ENCODE measurements at regions of chr18 and their contacts with region 1.

Region 1: GRCh38 chr18:43271593-43272432 is 5.5 kb downstream of the SYT4 start:
- DNase-seq: no peak
- H3K4me3 ChIP-seq: no peak overlapping the region
- H3K27ac ChIP-seq: no peak overlapping the region
- H3K4me1 ChIP-seq: peaks cover 0 to 5% (median 1%) of the 10 kb centered on the region in 4 experiments; a peak in 1 of 7 replicates
- H3K27me3 ChIP-seq: no peaks in the 10 kb centered on the region
- CTCF ChIP-seq: peak in 2 of 3 experiments; percentile 31 to 45; a peak in 2 of 4 replicates
- EP300 ChIP-seq: no peak
- POLR2A ChIP-seq: no peak
- RAD21 ChIP-seq: peak; percentile 76 to 80

Region 2: GRCh38 chr18:42298759-42299675 is 972.8 kb before region 1 on chr18:
- CTCF ChIA-PET with region 1: interaction called, 16 read pairs
- POLR2A ChIA-PET with region 1: no interaction called
- DNase-seq: peak; percentile 64 to 87
- H3K4me3 ChIP-seq: no peak overlapping the region
- H3K27ac ChIP-seq: no peak overlapping the region
- H3K4me1 ChIP-seq: peaks cover 0 to 3% (median 0%) of the 10 kb centered on the region in 4 experiments; a peak in 3 of 7 replicates
- H3K27me3 ChIP-seq: no peaks in the 10 kb centered on the region
- CTCF ChIP-seq: peak; percentile 74 to 91 (median 79)
- EP300 ChIP-seq: no peak
- POLR2A ChIP-seq: no peak
- RAD21 ChIP-seq: peak; percentile 89 to 93

Region 3: GRCh38 chr18:42742969-42743368 is 528.8 kb before region 1 on chr18:
- CTCF ChIA-PET with region 1: interaction called, 10 read pairs
- POLR2A ChIA-PET with region 1: interaction called, 4 read pairs
- DNase-seq: no peak
- H3K4me3 ChIP-seq: peak overlapping the region in 3 of 4 experiments; percentile 2 to 48 (median 18); a peak in 4 of 8 replicates
- H3K27ac ChIP-seq: peak overlapping the region; percentile 73
- H3K4me1 ChIP-seq: peaks cover 2 to 22% (median 12%) of the 10 kb centered on the region in 4 experiments; a peak in 4 of 7 replicates
- H3K27me3 ChIP-seq: no peaks in the 10 kb centered on the region
- CTCF ChIP-seq: no peak
- EP300 ChIP-seq: no peak
- POLR2A ChIP-seq: no peak
- RAD21 ChIP-seq: no peak

Region 4: DNA sequence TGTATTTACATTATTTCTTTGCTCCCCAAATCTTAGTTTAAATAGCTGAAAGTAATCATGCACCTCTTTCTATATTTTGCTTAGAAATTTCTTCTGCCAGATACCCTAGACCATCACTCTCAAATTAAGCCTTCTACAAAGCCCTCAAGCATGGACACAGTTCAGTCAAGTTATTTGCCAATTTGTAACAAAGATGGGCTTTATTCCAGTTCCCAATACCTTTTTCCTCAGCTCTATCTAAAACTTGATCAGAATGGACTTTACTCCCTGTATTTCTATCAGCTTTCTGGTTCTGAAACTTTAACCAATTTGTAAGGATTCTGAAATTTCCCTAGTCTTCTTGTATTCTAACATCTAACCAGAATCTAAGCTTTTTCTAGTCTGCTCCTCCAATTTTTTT is 51.1 kb before region 1 on chr18:
- CTCF ChIA-PET with region 1: interaction called, 10 read pairs
- POLR2A ChIA-PET with region 1: no interaction called
- DNase-seq: no peak
- H3K4me3 ChIP-seq: no peak overlapping the region
- H3K27ac ChIP-seq: no peak overlapping the region
- H3K4me1 ChIP-seq: no peaks in the 10 kb centered on the region
- H3K27me3 ChIP-seq: no peaks in the 10 kb centered on the region
- CTCF ChIP-seq: no peak
- EP300 ChIP-seq: no peak
- POLR2A ChIP-seq: no peak
- RAD21 ChIP-seq: no peak

Region 5: DNA sequence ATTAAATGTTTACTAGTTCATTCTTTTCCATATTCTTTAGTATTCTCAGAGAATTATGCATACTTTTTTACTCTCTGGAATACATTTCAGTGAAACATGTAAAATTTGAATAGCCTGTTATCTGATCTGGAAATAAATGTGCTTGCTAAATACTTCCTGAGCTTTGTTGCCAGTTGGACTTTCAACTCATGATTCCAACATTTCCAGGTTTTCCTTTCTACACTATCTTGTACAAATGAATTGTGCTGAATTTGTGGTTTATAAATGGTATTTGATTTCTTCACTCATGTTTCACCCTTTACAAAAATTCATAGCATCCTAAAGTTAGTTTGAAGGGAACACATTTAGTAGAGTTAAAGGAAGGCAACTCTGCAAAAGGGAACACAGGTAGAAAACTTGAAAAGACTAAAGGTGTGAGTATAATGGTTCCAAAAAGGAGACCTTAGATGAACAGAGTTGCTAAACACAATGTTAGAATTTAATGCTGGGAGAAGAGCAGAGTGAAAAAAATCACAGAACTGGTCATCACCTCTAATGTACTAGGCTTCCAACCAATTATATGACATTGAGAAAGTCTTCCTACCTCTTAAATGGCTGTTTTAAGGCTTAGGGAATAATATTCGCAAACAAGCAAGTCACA is 23.1 kb before region 1 on chr18:
- CTCF ChIA-PET with region 1: interaction called, 19 read pairs
- POLR2A ChIA-PET with region 1: no interaction called
- DNase-seq: no peak
- H3K4me3 ChIP-seq: no peak overlapping the region
- H3K27ac ChIP-seq: no peak overlapping the region
- H3K4me1 ChIP-seq: no peaks in the 10 kb centered on the region
- H3K27me3 ChIP-seq: no peaks in the 10 kb centered on the region
- CTCF ChIP-seq: no peak
- EP300 ChIP-seq: no peak
- POLR2A ChIP-seq: no peak
- RAD21 ChIP-seq: no peak

Measured in H1 (cell line).